ENCODE measurements at regions of chrX and their contacts with region 1.

Region 1: DNA sequence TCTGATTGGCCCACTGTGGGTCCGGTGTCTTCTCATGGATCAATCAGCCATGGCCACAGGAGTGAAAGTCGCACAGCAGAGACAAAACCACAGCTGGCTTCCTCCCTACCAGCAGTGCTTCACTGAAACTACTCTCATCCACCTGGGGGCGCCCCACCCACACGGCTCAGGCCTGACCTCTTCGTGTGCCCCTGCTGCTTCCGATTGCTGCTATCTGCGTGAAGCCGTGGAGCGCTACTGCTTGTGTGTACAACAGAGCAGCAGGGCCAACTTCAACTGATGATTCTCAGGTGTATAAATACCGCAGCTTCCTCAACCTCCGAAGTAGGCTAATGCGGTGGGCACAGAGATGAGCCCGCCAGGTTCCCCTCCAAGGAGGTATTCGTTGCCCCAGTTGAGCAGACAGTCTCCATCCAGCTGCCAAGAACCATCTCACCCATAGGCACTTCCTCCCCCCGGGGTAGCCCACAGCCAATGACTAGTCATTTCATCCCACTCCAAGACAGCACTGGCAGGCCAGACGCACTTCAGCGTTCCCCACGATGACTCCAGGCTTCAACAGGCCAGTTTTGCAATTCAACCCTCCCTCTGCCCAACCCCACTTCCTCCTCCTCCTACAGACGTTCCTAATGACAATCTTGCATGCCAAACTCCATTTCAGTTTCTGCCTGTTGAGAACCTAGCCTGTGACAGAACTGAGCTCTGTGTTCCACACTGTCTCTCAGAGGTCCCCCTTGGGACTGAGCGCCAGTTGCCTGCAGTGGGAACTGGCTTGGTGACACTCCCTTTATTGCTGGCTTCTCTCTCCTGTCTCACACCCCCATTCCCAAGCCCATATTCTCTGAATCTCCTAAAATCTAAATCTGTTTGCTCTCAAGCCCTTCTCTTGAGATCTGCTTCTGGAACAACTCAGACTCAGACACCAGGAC is 41.3 kb upstream of the ATP6AP2 start:
- DNase-seq: no peak
- H3K4me3 ChIP-seq: no peak overlapping the region
- H3K4me3 Mint-ChIP-seq: no peak overlapping the region
- H3K27ac Mint-ChIP-seq: no peak overlapping the region
- H3K4me1 ChIP-seq: peaks cover 5% of the 10 kb centered on the region; the same call in 1 of the 2 replicates
- H3K4me1 Mint-ChIP-seq: peaks cover 7% of the 10 kb centered on the region
- H3K27me3 ChIP-seq: no peaks in the 10 kb centered on the region
- H3K27me3 Mint-ChIP-seq: no peaks in the 10 kb centered on the region
- CTCF ChIP-seq: no peak

Region 2: DNA sequence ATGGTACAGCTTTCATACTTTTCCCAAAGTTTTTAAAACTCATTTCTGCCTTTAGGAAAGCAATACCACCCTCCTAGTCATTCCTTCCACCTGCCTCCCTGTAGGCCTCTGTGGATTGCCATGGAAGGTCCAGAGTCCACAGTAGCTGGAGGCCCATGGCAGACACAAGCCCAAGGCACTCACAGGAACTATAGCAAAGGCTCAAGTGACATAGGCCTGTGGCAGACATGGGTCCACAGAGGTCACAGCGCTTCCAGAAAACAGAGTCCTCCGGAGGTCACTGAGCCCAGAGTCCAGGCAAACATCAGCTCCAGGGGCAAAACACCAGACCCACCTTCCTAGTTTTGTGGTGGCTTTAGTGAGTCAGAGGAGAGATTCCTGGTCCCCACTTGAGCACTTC is 106.3 kb before region 1 on chrX:
- CTCF ChIA-PET with region 1: no interaction called
- POLR2A ChIA-PET with region 1: no interaction called
- intact Hi-C with region 1: no loop called
- DNase-seq: no peak
- H3K4me3 ChIP-seq: no peak overlapping the region
- H3K4me3 Mint-ChIP-seq: no peak overlapping the region
- H3K27ac Mint-ChIP-seq: no peak overlapping the region
- H3K4me1 ChIP-seq: no peaks in the 10 kb centered on the region
- H3K4me1 Mint-ChIP-seq: no peaks in the 10 kb centered on the region
- H3K27me3 ChIP-seq: no peaks in the 10 kb centered on the region
- H3K27me3 Mint-ChIP-seq: no peaks in the 10 kb centered on the region
- CTCF ChIP-seq: no peak

Region 3: DNA sequence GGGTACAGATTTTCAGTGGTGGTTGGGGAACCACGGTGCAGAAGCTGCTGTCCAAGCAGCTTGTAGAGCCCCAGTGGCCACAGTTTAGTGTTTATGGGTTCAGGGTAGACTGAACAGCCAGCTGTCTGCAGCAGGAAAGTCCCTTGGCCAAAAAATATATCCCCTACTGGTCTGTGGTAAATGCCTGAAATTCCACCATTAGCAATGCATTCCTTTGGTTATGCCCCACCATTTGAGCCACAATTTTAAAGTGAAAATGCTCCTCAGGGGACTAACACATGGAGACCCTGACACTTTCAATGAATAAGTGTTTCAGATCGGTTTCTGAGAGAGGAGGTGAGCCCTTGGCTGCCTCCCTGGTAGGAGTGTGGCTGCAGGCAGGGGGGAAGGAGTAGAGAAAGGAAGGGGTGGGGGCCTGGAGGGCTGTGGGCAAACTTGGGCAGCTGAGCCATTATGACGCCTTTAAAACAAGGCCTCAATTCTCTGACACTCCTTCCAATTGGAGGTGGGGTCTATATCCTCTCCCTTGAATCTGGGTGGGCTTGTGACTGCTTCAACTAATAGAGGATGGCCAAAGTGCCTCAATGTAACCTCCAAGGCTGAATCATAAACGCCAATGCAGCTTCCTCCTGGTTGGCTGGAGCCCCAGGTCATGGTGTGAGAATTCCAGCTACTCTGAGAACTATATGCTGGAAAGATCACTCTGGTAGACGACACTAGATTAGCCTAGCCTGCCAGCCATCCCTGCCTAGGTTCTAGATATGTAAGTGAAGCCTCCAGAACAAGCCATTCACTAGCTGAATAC is 34.5 kb before region 1 on chrX:
- CTCF ChIA-PET with region 1: no interaction called
- POLR2A ChIA-PET with region 1: no interaction called
- intact Hi-C with region 1: no loop called
- DNase-seq: no peak
- H3K4me3 ChIP-seq: no peak overlapping the region
- H3K4me3 Mint-ChIP-seq: no peak overlapping the region
- H3K27ac Mint-ChIP-seq: no peak overlapping the region
- H3K4me1 ChIP-seq: no peaks in the 10 kb centered on the region
- H3K4me1 Mint-ChIP-seq: no peaks in the 10 kb centered on the region
- H3K27me3 ChIP-seq: no peaks in the 10 kb centered on the region
- H3K27me3 Mint-ChIP-seq: no peaks in the 10 kb centered on the region
- CTCF ChIP-seq: no peak

Region 4: DNA sequence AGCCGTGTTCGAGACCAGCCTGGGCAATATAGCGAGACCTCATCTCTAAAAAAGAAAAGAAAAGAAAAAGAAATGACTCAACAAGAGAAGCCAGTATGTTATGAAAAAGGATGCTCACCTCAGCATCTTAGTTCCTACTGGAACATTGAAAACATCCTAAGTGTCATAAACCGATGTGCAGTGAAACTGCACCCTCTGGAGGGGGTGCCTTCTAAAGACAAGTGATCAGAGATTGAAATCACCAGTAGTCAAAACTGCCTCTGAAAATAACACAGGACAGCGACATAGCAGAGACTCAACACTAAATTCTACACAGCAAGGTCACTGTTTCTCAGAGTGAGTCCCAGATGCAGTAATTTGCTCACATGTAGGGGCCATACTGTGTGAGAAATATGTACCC is 13.3 kb after region 1 on chrX:
- CTCF ChIA-PET with region 1: interaction called, 12 read pairs
- POLR2A ChIA-PET with region 1: no interaction called
- intact Hi-C with region 1: loop called (anchors 1 kb)
- DNase-seq: peak in 1 of 2 experiments; percentile 33
- H3K4me3 ChIP-seq: no peak overlapping the region
- H3K4me3 Mint-ChIP-seq: no peak overlapping the region
- H3K27ac Mint-ChIP-seq: no peak overlapping the region
- H3K4me1 ChIP-seq: no peaks in the 10 kb centered on the region
- H3K4me1 Mint-ChIP-seq: no peaks in the 10 kb centered on the region
- H3K27me3 ChIP-seq: no peaks in the 10 kb centered on the region
- H3K27me3 Mint-ChIP-seq: peaks cover 2% of the 10 kb centered on the region
- CTCF ChIP-seq: peak in 1 of 2 experiments; percentile 36

Region 5: DNA sequence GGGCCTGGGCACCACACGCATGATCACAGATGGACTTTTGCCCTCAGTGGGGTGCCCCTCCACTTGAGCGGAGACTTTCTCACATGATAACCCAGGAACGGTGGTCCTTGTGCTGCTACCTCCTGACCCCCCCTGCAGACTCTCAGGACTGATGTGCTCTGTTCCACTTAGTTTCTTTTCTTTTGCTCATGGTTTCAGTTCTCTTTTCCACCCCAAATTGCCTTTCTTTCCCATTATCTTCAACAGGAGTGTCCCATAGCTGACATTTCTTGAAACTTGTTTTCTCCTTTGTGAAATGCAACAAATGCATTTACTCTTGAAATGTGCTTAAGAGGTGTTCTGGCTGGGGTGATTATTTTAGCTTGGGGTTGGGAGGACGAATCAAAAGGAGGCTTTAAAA is 92.7 kb after region 1 on chrX:
- CTCF ChIA-PET with region 1: no interaction called
- POLR2A ChIA-PET with region 1: no interaction called
- intact Hi-C with region 1: loop called (anchors 5 kb)
- DNase-seq: no peak
- H3K4me3 ChIP-seq: no peak overlapping the region
- H3K4me3 Mint-ChIP-seq: no peak overlapping the region
- H3K27ac Mint-ChIP-seq: no peak overlapping the region
- H3K4me1 ChIP-seq: no peaks in the 10 kb centered on the region
- H3K4me1 Mint-ChIP-seq: no peaks in the 10 kb centered on the region
- H3K27me3 ChIP-seq: no peaks in the 10 kb centered on the region
- H3K27me3 Mint-ChIP-seq: no peaks in the 10 kb centered on the region
- CTCF ChIP-seq: no peak